ENCODE measurements at regions of chr6 and their contacts with region 1.

Region 1: GRCh38 chr6:154868143-154868594 is 126.9 kb upstream of the TIAM2 start:
- DNase-seq: peak; percentile 46
- H3K4me3 ChIP-seq: no peak overlapping the region
- H3K27ac ChIP-seq: peak overlapping the region in 1 of 2 experiments; percentile 38; a peak in 1 of 4 replicates
- H3K4me1 ChIP-seq: peaks cover 0 to 4% of the 10 kb centered on the region in 2 experiments; a peak in 1 of 4 replicates
- H3K27me3 ChIP-seq: no peaks in the 10 kb centered on the region
- CTCF ChIP-seq: peak; percentile 84
- EP300 ChIP-seq: no peak
- RAD21 ChIP-seq: peak; percentile 87

Region 2: DNA sequence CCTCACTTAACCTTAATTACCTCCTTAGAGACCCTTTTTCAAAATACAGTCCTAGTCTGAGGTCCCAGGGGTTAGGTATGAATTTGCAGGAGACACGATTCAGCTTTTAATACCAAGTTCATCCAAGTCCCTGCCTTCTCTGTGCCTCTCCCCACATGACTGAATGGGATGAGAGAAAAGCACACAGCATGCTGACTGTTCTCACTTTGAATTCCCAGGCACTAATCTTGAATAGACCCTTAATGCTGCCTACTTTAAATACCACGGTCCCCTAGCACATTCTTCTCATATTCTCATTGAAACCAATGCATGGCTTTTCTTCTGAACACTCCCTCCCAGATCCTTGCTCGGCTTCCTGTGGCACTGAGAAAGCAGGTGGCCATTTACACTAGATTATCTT is 165.1 kb before region 1 on chr6:
- CTCF ChIA-PET with region 1: no interaction called
- POLR2A ChIA-PET with region 1: no interaction called
- DNase-seq: no peak
- H3K4me3 ChIP-seq: no peak overlapping the region
- H3K27ac ChIP-seq: no peak overlapping the region
- H3K4me1 ChIP-seq: no peaks in the 10 kb centered on the region
- H3K27me3 ChIP-seq: no peaks in the 10 kb centered on the region
- CTCF ChIP-seq: no peak
- EP300 ChIP-seq: no peak
- RAD21 ChIP-seq: no peak

Region 3: GRCh38 chr6:154852687-154853086 is 15.5 kb before region 1 on chr6:
- CTCF ChIA-PET with region 1: interaction called, 22 read pairs
- POLR2A ChIA-PET with region 1: no interaction called
- DNase-seq: no peak
- H3K4me3 ChIP-seq: no peak overlapping the region
- H3K27ac ChIP-seq: peak overlapping the region in 1 of 2 experiments; percentile 20; a peak in 1 of 4 replicates
- H3K4me1 ChIP-seq: peaks cover 16 to 21% of the 10 kb centered on the region in 2 experiments; a peak in 3 of 4 replicates
- H3K27me3 ChIP-seq: no peaks in the 10 kb centered on the region
- CTCF ChIP-seq: no peak
- EP300 ChIP-seq: no peak
- RAD21 ChIP-seq: no peak

Region 4: DNA sequence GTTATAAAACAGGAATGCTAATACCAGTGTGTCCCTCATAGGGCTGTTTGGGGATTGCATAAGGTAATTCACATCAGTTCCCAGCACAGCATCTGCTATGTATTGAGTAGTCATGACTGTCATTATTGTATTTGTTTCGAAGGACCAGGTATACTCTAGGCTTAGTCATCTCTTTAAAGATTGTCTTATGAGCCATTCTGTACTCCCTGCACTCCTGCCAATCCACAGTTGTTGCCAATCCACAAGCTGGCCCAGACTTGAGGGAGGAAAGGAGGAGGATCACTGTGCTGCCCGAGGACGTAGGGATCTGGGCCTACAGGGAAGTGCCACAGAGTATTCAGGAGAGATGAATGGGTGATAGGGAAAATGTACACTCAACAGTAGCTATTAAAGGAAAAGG is 13.9 kb after region 1 on chr6:
- CTCF ChIA-PET with region 1: interaction called, 12 read pairs
- POLR2A ChIA-PET with region 1: no interaction called
- DNase-seq: no peak
- H3K4me3 ChIP-seq: no peak overlapping the region
- H3K27ac ChIP-seq: no peak overlapping the region; a peak in 1 of 4 replicates
- H3K4me1 ChIP-seq: peaks cover 0 to 2% of the 10 kb centered on the region in 2 experiments; a peak in 1 of 4 replicates
- H3K27me3 ChIP-seq: no peaks in the 10 kb centered on the region
- CTCF ChIP-seq: no peak
- EP300 ChIP-seq: no peak
- RAD21 ChIP-seq: no peak

Region 5: GRCh38 chr6:154901876-154902552 is 33.8 kb after region 1 on chr6:
- CTCF ChIA-PET with region 1: interaction called, 11 read pairs
- POLR2A ChIA-PET with region 1: no interaction called
- DNase-seq: peak; percentile 71
- H3K4me3 ChIP-seq: no peak overlapping the region
- H3K27ac ChIP-seq: peak overlapping the region in 1 of 2 experiments; percentile 88; a peak in 3 of 4 replicates
- H3K4me1 ChIP-seq: peaks cover 0 to 32% of the 10 kb centered on the region in 2 experiments; a peak in 2 of 4 replicates
- H3K27me3 ChIP-seq: no peaks in the 10 kb centered on the region
- CTCF ChIP-seq: no peak
- EP300 ChIP-seq: no peak; a peak in 1 of 4 replicates
- RAD21 ChIP-seq: no peak

Region 6: DNA sequence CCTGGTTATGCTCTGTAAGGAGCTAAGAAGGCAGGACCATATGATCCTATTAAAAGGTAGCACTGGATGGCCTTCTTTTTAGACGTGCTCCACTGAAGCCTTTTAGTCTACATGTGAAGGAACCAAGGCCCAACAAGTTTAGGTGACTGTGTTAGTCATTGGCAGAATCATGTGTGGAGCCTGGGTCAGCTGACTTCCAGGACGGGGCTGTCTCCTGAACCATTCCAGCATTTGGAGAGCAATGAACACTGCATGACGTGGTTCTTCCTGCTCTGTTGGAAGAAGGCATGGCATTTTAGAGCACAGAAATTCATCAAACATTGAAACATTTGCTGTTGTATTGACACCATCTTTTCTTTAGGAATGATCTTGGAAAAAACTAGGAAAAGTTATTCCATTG is 39.1 kb after region 1 on chr6:
- CTCF ChIA-PET with region 1: interaction called, 11 read pairs
- POLR2A ChIA-PET with region 1: no interaction called
- DNase-seq: no peak
- H3K4me3 ChIP-seq: no peak overlapping the region
- H3K27ac ChIP-seq: no peak overlapping the region
- H3K4me1 ChIP-seq: peaks cover 0 to 7% of the 10 kb centered on the region in 2 experiments; a peak in 2 of 4 replicates
- H3K27me3 ChIP-seq: no peaks in the 10 kb centered on the region
- CTCF ChIP-seq: no peak
- EP300 ChIP-seq: no peak
- RAD21 ChIP-seq: no peak

Region 7: GRCh38 chr6:154923199-154923869 is 55.2 kb after region 1 on chr6:
- CTCF ChIA-PET with region 1: interaction called, 38 read pairs
- POLR2A ChIA-PET with region 1: no interaction called
- DNase-seq: no peak
- H3K4me3 ChIP-seq: no peak overlapping the region
- H3K27ac ChIP-seq: no peak overlapping the region
- H3K4me1 ChIP-seq: peaks cover 0 to 21% of the 10 kb centered on the region in 2 experiments; a peak in 2 of 4 replicates
- H3K27me3 ChIP-seq: no peaks in the 10 kb centered on the region
- CTCF ChIP-seq: no peak
- EP300 ChIP-seq: no peak
- RAD21 ChIP-seq: no peak

Region 8: GRCh38 chr6:154928325-154928922 is 60.3 kb after region 1 on chr6:
- CTCF ChIA-PET with region 1: interaction called, 38 read pairs
- POLR2A ChIA-PET with region 1: no interaction called
- DNase-seq: peak; percentile 62
- H3K4me3 ChIP-seq: no peak overlapping the region
- H3K27ac ChIP-seq: no peak overlapping the region
- H3K4me1 ChIP-seq: peaks cover 33 to 39% of the 10 kb centered on the region in 2 experiments
- H3K27me3 ChIP-seq: no peaks in the 10 kb centered on the region
- CTCF ChIP-seq: peak; percentile 80
- EP300 ChIP-seq: no peak
- RAD21 ChIP-seq: peak; percentile 97

Measured in SK-N-SH (cell line).